ENCODE measurements at regions of chr3 and their contacts with region 1.

Region 1: GRCh38 chr3:29280404-29281093 is at the start of gene RBMS3:
- DNase-seq: peak; percentile 85 to 92
- ATAC-seq: peak; percentile 78 to 82 (median 80)
- H3K4me3 ChIP-seq: peak within 1 kb of the TSS; percentile 76
- H3K27ac ChIP-seq: peak within 1 kb of the TSS; percentile 93
- H3K4me1 ChIP-seq: peaks cover 8% of the 10 kb centered on the region
- H3K27me3 ChIP-seq: no peaks in the 10 kb centered on the region
- CTCF ChIP-seq: peak; percentile 50
- total RNA-seq, gene RBMS3: 23.5 to 34.5 (median 29.7) TPM

Region 2: GRCh38 chr3:28916713-28917499 is 363.6 kb before region 1 on chr3:
- intact Hi-C with region 1: loop called (anchors 5 to 10 kb)
- DNase-seq: peak; percentile 48 to 78
- ATAC-seq: peak; percentile 83 to 98 (median 94)
- H3K4me3 ChIP-seq: peak overlapping the region; percentile 58
- H3K27ac ChIP-seq: peak overlapping the region; percentile 59
- H3K4me1 ChIP-seq: peaks cover 13% of the 10 kb centered on the region
- H3K27me3 ChIP-seq: no peaks in the 10 kb centered on the region
- CTCF ChIP-seq: peak; percentile 75

Region 3: GRCh38 chr3:29332195-29332637 is 51.7 kb after region 1 on chr3:
- intact Hi-C with region 1: loop called in 1 of 2 experiments (anchors 5 kb)
- DNase-seq: no peak
- ATAC-seq: peak in 2 of 4 donors; percentile 31 to 37
- H3K4me3 ChIP-seq: peak overlapping the region; percentile 17
- H3K27ac ChIP-seq: peak overlapping the region; percentile 79
- H3K4me1 ChIP-seq: peaks cover 70% of the 10 kb centered on the region
- H3K27me3 ChIP-seq: no peaks in the 10 kb centered on the region
- CTCF ChIP-seq: no peak

Region 4: GRCh38 chr3:29513231-29513630 is 232.7 kb after region 1 on chr3:
- intact Hi-C with region 1: loop called in 1 of 2 experiments (anchors 5 kb)
- DNase-seq: no peak
- ATAC-seq: no peak
- H3K4me3 ChIP-seq: peak overlapping the region; percentile 38
- H3K27ac ChIP-seq: peak overlapping the region; percentile 23
- H3K4me1 ChIP-seq: peaks cover 51% of the 10 kb centered on the region
- H3K27me3 ChIP-seq: no peaks in the 10 kb centered on the region
- CTCF ChIP-seq: no peak

Region 5: DNA sequence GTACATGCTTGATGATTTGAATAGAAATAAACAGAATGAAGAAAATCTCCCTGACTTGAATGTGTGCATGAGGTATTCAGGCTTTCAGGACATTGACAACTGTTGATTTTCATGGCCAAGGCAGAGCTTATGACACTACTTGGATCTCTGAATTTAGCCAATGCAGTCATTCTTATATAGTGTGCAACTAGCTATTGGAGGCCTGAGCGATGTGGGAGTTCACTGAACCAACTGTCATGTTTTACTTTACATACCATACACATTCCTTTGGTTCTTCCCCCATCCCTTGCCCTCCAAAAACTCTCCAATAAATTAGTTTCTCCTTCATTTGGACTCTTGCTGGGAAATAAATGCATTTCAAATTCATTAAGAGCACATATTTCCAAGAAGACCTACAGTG is 460.7 kb after region 1 on chr3:
- intact Hi-C with region 1: no loop called
- DNase-seq: no peak
- ATAC-seq: no peak
- H3K4me3 ChIP-seq: no peak overlapping the region
- H3K27ac ChIP-seq: no peak overlapping the region
- H3K4me1 ChIP-seq: peaks cover 6% of the 10 kb centered on the region
- H3K27me3 ChIP-seq: no peaks in the 10 kb centered on the region
- CTCF ChIP-seq: no peak

Region 6: DNA sequence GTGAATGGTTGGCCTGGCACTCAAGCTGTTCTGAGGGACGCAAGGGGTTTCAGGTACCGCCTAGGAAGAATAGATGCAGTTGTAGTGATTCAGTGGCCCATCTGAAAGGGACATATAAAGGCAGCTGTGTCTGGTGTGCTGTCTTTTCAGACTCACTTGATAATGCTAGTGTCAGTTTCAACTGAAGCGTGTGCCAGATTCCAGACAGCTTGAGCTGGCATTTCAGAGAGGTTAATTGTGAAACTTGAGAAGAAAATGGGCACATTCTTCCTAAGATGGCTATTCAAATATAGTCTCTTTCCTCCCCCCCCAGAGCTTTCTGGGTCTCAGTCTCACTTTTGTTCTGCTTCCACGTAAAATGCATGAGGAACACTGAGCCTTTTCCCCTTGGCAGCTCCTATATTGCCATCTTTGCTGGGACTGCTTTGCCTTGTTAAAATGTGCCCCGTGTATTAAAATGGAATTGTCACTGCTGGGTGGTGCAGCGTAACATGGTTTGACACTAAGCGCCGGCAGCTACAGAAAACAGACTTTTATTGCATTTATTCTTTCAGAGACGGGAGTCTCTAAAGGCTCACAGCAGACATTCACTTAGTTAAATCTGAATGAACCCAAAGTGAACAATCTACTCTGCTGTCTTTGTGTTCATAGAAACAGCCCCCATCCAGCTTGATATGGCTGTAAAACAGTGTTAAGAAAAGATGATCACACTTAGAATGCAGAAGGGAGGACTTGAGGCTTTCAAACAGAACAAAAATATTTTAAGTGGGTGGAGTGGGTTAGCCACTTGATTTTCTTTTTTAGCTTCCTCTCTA is 479.1 kb after region 1 on chr3:
- intact Hi-C with region 1: loop called (anchors 1 to 10 kb)
- DNase-seq: peak in 1 of 2 donors; percentile 18
- ATAC-seq: peak; percentile 80 to 92 (median 90)
- H3K4me3 ChIP-seq: peak overlapping the region; percentile 45
- H3K27ac ChIP-seq: peak overlapping the region; percentile 78
- H3K4me1 ChIP-seq: peaks cover 49% of the 10 kb centered on the region
- H3K27me3 ChIP-seq: no peaks in the 10 kb centered on the region
- CTCF ChIP-seq: no peak